IMR-90 (cell line): ENCODE measurements at regions of chr9 and their contacts with region 1.

Region 1: GRCh38 chr9:70924895-70925547 is 196.4 kb downstream of the TRPM3 start:
- DNase-seq: peak; percentile 84
- ATAC-seq: peak; percentile 91
- H3K4me3 ChIP-seq: no peak overlapping the region
- H3K27ac ChIP-seq: no peak overlapping the region
- H3K4me1 ChIP-seq: 0 out of 2 replicates have a peak, but pooled peaks cover 2% of the 10 kb centered on the region
- H3K27me3 ChIP-seq: peaks cover 4% of the 10 kb centered on the region; the same call in 1 of the 2 replicates
- CTCF ChIP-seq: peak; percentile 92
- POLR2A ChIP-seq: no peak
- RAD21 ChIP-seq: peak; percentile 85

Region 2: DNA sequence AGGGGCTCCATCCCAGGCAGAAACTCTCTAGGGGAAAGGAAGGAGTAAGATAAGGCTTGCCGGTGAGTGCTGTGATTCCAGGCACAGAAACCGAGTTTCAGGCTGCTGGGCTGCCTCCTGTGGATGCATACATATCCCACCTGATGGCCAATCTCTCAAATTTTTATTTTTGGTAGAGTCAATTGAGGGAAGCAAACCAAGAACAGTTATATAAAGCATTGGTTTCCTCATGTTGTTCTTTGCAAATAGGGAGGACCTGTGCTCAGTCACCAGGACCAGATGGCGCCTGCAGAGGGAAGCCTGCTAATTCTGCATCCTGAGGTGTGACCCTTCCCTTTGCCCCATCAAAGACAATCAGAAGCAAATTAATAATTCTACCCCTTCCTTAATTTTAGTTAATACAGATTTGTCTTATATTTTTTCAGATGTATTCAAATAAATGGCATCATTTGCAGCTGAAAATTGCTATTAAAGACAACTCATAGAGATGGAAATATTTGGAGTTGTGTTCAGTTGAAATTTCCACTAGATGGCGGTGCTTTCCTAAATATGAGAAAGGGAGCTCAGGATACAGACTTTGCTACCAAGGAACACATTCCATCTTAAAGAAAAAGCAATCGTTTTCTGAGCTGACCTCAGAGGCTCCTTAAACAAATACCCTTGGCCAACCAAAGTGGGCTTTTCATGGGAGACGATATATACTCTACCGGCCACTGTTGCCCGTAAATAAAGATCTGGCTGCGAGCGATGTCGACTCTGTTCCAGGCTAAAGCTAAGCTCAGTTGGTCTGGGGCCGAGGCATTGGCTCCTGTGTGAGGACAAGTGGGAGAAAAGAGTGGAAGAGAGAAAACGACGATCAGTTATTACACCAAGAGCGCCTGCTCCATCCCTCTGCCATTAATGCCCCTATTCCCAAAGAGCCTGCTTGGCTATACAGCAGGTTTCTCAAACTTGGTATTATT is 284.9 kb before region 1 on chr9:
- CTCF ChIA-PET with region 1: interaction called, 3 read pairs
- POLR2A ChIA-PET with region 1: interaction called, 3 read pairs
- dilution Hi-C with region 1: no loop called
- in situ Hi-C with region 1: no loop called
- intact Hi-C with region 1: loop called (anchors 1 kb)
- DNase-seq: peak; percentile 60
- ATAC-seq: peak; percentile 88
- H3K4me3 ChIP-seq: no peak overlapping the region
- H3K27ac ChIP-seq: no peak overlapping the region
- H3K4me1 ChIP-seq: no peaks in the 10 kb centered on the region; the same call in 1 of the 2 replicates
- H3K27me3 ChIP-seq: peaks cover 23% of the 10 kb centered on the region
- CTCF ChIP-seq: peak; percentile 85
- POLR2A ChIP-seq: no peak
- RAD21 ChIP-seq: peak; percentile 86

Region 3: DNA sequence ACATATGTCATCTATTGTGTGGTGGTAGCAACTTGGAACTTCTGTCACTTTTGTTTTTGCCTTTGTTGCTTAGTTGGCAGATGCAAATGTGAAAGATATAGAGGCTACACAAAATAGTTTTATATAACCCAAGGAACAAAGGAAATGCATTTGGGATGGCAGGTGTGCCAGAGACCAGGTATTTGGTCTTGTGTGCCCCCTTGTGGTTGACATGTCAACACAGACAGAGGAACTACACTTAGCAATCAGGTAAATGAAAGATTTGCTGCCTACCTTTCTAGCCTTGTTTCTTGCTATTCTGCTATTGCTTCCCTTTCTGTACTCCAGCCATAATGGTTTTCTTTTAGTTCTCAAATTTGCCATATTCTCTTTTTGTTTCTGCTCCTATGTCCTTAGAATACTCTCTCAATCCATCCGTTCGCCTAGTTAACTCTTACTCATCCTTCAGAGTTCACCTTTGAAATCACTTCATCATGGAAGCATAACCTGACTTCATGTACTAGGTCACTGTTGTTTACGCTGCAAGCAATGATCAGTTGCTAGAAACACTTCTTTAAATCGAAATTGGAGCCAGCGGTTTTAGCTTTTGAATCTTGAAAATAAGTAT is 76.9 kb after region 1 on chr9:
- CTCF ChIA-PET with region 1: interaction called, 4 read pairs
- POLR2A ChIA-PET with region 1: no interaction called
- dilution Hi-C with region 1: no loop called
- in situ Hi-C with region 1: loop called (anchors 25 kb)
- intact Hi-C with region 1: loop called (anchors 1 kb)
- DNase-seq: peak; percentile 25
- ATAC-seq: no peak
- H3K4me3 ChIP-seq: no peak overlapping the region
- H3K27ac ChIP-seq: no peak overlapping the region
- H3K4me1 ChIP-seq: no peaks in the 10 kb centered on the region
- H3K27me3 ChIP-seq: no peaks in the 10 kb centered on the region
- CTCF ChIP-seq: peak; percentile 53
- POLR2A ChIP-seq: no peak
- RAD21 ChIP-seq: peak; percentile 68

Region 4: DNA sequence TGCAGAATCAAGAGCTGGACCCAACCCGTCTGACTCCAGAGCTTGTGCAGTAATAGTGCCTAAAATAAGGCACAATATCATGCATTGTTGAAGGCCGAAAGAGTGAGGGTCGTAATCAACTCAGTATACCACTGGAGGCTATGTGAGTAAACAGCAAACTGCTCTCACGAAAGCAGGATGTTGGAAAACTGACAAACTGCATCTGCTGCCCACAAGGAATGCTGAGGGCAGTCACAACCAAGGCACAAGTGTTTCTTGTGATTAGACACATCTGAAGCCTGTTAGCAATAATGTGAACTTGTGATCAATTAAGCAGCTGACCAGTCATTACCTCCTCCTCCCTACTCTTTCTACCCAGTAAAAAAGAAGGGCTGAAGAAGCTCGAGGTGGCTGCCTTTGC is 147.6 kb after region 1 on chr9:
- CTCF ChIA-PET with region 1: no interaction called
- POLR2A ChIA-PET with region 1: no interaction called
- dilution Hi-C with region 1: no loop called
- in situ Hi-C with region 1: no loop called
- intact Hi-C with region 1: loop called (anchors 5 kb)
- DNase-seq: no peak
- ATAC-seq: no peak
- H3K4me3 ChIP-seq: no peak overlapping the region
- H3K27ac ChIP-seq: no peak overlapping the region
- H3K4me1 ChIP-seq: no peaks in the 10 kb centered on the region
- H3K27me3 ChIP-seq: no peaks in the 10 kb centered on the region
- CTCF ChIP-seq: no peak
- POLR2A ChIP-seq: no peak
- RAD21 ChIP-seq: no peak

Region 5: DNA sequence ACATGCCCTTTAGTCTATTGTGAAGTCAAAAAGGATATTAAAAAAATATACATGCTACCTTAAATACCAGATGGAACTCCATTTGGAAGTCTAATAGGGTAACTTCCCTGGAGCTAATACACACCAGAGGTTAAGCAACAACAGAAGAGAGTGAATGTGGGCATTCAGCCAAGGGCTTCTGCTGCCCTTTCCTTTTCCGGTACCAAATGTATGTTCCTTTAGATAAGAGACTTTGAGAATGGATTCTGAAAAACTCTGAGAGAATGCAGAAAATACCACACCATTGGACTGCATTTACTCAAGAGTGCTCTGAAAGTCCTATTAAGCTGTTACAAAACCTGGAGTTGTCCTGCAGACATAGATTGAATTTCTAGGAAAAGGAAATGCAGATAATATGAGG is 220.2 kb after region 1 on chr9:
- CTCF ChIA-PET with region 1: no interaction called
- POLR2A ChIA-PET with region 1: no interaction called
- dilution Hi-C with region 1: no loop called
- in situ Hi-C with region 1: no loop called
- intact Hi-C with region 1: loop called (anchors 5 kb)
- DNase-seq: no peak
- ATAC-seq: no peak
- H3K4me3 ChIP-seq: no peak overlapping the region
- H3K27ac ChIP-seq: no peak overlapping the region
- H3K4me1 ChIP-seq: no peaks in the 10 kb centered on the region
- H3K27me3 ChIP-seq: no peaks in the 10 kb centered on the region
- CTCF ChIP-seq: no peak
- POLR2A ChIP-seq: no peak
- RAD21 ChIP-seq: no peak

Region 6: DNA sequence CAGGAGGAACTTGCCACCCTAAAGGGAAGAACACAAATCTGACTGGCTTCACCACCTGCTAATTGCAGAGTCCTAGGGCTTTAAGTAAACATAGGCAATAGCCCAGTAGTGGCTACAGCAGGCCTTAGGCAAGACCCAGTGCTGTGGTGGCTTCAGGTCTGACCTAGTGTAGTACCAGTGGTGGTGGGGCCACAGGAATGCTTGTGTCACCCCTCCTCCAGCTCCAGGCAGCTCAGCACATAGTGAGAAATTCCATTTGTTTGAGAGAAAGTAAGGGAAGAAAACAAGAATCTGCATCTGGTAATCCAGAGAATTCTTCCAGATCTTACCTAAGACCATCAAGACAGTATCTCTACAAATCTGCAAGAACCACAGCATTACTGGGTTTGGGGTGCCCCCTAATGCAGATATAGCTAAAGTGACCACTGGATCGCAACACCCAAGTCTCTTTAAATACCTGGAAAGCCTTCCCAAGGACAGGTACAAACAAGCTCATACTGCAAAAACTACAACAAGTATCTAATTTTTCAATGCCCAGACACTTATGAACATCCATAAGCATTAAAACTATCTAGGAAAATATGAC is 299.0 kb after region 1 on chr9:
- CTCF ChIA-PET with region 1: no interaction called
- POLR2A ChIA-PET with region 1: no interaction called
- dilution Hi-C with region 1: no loop called
- in situ Hi-C with region 1: no loop called
- intact Hi-C with region 1: loop called (anchors 5 kb)
- DNase-seq: no peak
- ATAC-seq: no peak
- H3K4me3 ChIP-seq: no peak overlapping the region
- H3K27ac ChIP-seq: no peak overlapping the region
- H3K4me1 ChIP-seq: no peaks in the 10 kb centered on the region
- H3K27me3 ChIP-seq: no peaks in the 10 kb centered on the region
- CTCF ChIP-seq: no peak
- POLR2A ChIP-seq: no peak
- RAD21 ChIP-seq: no peak

Region 7: GRCh38 chr9:71249729-71250317 is 324.8 kb after region 1 on chr9:
- CTCF ChIA-PET with region 1: interaction called, 6 read pairs
- POLR2A ChIA-PET with region 1: no interaction called
- dilution Hi-C with region 1: no loop called
- in situ Hi-C with region 1: no loop called
- intact Hi-C with region 1: loop called (anchors 1 kb)
- DNase-seq: peak; percentile 64
- ATAC-seq: peak; percentile 91
- H3K4me3 ChIP-seq: no peak overlapping the region
- H3K27ac ChIP-seq: no peak overlapping the region
- H3K4me1 ChIP-seq: no peaks in the 10 kb centered on the region
- H3K27me3 ChIP-seq: no peaks in the 10 kb centered on the region
- CTCF ChIP-seq: peak; percentile 93
- POLR2A ChIP-seq: no peak
- RAD21 ChIP-seq: peak; percentile 64